CD8-positive, alpha-beta T cell (primary cell): ENCODE measurements at regions of chrX and their contacts with region 1.

Region 1: GRCh38 chrX:1649621-1650020 is 34.8 kb downstream of the ASMT start:
- DNase-seq: no peak
- ATAC-seq: no peak
- H3K4me3 ChIP-seq: no peak overlapping the region
- H3K4me3 Mint-ChIP-seq: no peak overlapping the region
- H3K27ac ChIP-seq: no peak overlapping the region
- H3K27ac Mint-ChIP-seq: no peak overlapping the region
- H3K4me1 ChIP-seq: peaks cover 2% of the 10 kb centered on the region
- H3K4me1 Mint-ChIP-seq: peaks cover 7% of the 10 kb centered on the region
- H3K27me3 ChIP-seq: no peaks in the 10 kb centered on the region
- H3K27me3 Mint-ChIP-seq: no peaks in the 10 kb centered on the region
- CTCF ChIP-seq: no peak

Region 2: DNA sequence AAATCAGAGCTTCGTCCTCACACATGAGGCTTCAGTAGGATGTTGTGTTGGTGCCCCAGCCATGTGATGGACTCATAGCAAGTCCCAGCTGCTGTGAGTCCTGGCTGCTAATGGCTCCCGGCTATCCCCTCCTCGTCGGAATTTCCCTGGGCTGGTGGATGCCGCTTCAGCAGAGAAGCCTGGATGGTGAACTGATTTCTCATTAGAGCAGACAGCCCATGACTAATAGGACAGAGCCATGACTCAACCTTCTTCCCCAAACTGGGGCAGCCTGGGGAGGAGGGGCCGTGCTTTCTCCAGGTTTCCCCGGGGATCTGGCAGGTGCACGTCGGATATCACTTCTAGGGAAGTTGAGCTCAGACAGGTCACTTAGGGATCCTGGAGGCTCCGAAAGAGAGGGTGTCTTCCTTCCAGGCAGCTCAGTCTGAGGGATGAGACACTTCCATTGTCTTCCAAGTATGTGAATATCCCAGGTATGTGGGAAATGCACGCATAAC is 78.0 kb after region 1 on chrX:
- CTCF ChIA-PET with region 1: no interaction called
- POLR2A ChIA-PET with region 1: no interaction called
- intact Hi-C with region 1: no loop called
- DNase-seq: no peak
- ATAC-seq: no peak
- H3K4me3 ChIP-seq: no peak overlapping the region
- H3K4me3 Mint-ChIP-seq: no peak overlapping the region
- H3K27ac ChIP-seq: no peak overlapping the region
- H3K27ac Mint-ChIP-seq: no peak overlapping the region
- H3K4me1 ChIP-seq: no peaks in the 10 kb centered on the region
- H3K4me1 Mint-ChIP-seq: no peaks in the 10 kb centered on the region
- H3K27me3 ChIP-seq: no peaks in the 10 kb centered on the region
- H3K27me3 Mint-ChIP-seq: no peaks in the 10 kb centered on the region
- CTCF ChIP-seq: no peak

Region 3: DNA sequence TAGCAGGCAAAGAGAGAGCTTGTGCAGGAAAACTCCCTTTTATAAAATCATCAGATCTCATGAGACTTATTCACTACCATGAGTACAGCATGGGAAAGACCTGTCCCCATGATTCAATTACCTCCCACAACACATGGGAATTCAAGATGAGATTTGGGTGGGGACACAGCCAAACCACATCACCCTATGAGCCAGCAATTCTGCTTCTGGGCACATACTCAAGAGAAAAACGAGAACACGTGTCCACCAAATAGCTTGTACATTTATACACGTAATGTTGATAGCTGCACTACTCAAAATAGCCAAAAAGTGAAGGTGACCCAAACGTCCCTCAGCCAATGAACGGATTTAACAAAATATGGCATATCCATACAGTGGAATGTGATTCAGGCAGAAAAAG is 945.6 kb after region 1 on chrX:
- CTCF ChIA-PET with region 1: no interaction called
- POLR2A ChIA-PET with region 1: no interaction called
- intact Hi-C with region 1: loop called (anchors 1 kb)
- DNase-seq: no peak
- ATAC-seq: no peak
- H3K4me3 ChIP-seq: no peak overlapping the region
- H3K4me3 Mint-ChIP-seq: no peak overlapping the region
- H3K27ac ChIP-seq: no peak overlapping the region
- H3K27ac Mint-ChIP-seq: no peak overlapping the region
- H3K4me1 ChIP-seq: no peaks in the 10 kb centered on the region
- H3K4me1 Mint-ChIP-seq: peaks cover 12% of the 10 kb centered on the region
- H3K27me3 ChIP-seq: no peaks in the 10 kb centered on the region
- H3K27me3 Mint-ChIP-seq: no peaks in the 10 kb centered on the region
- CTCF ChIP-seq: no peak

Region 4: GRCh38 chrX:2627272-2627867 is 977.7 kb after region 1 on chrX:
- CTCF ChIA-PET with region 1: no interaction called
- POLR2A ChIA-PET with region 1: no interaction called
- intact Hi-C with region 1: loop called (anchors 1 kb)
- DNase-seq: peak in 6 of 9 experiments; percentile 39 to 69 (median 50)
- ATAC-seq: peak; percentile 33
- H3K4me3 ChIP-seq: no peak overlapping the region
- H3K4me3 Mint-ChIP-seq: no peak overlapping the region
- H3K27ac ChIP-seq: no peak overlapping the region
- H3K27ac Mint-ChIP-seq: peak overlapping the region; percentile 58
- H3K4me1 ChIP-seq: peaks cover 16% of the 10 kb centered on the region
- H3K4me1 Mint-ChIP-seq: peaks cover 48% of the 10 kb centered on the region
- H3K27me3 ChIP-seq: no peaks in the 10 kb centered on the region
- H3K27me3 Mint-ChIP-seq: no peaks in the 10 kb centered on the region
- CTCF ChIP-seq: peak; percentile 43